H1 (cell line): ENCODE measurements at regions of chr14 and their contacts with region 1.

Region 1: DNA sequence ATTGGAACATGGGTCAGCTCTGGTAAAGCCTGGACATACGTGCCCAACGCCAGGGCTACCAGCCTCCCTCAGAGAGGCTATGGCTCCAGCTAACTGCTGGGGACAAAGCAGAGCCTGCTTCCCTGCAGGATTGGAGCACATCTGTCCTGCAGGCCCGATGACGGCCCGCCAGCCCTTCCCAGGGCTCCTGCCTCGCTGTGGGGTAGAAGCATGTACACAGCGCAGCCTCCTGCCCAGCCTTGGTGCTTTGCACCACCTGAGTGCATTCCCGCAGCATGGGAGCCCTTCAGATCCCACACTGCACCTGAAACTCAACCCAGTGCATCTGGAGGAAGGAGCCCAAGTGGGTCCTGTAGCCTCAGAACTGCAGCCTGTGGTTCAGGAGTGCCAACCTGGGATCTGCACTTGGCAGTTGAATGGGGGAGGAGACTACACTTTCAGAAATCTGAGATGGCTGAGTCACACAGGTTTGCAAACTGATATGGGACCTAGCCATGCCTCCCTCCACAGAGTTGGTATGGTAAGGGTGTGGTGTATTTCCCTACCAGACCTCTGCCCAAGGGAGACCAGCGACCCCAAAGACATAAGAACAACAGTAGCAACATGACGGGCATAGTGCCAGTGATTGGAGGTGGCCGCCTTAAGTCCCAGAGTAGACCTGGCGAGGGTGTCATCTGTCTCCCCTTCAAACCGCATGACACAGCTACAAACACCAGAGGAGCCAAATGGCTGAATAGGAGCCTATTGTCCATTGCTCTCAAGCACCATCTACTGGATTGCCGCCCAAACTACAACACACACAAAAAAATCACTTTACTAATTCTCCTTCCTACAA is 273.9 kb upstream of the MIS18BP1 start:
- DNase-seq: peak; percentile 50 to 73
- H3K4me3 ChIP-seq: no peak overlapping the region
- H3K27ac ChIP-seq: no peak overlapping the region
- H3K4me1 ChIP-seq: peaks cover 0 to 6% (median 0%) of the 10 kb centered on the region in 4 experiments; a peak in 3 of 7 replicates
- H3K27me3 ChIP-seq: no peaks in the 10 kb centered on the region; a peak in 1 of 7 replicates
- CTCF ChIP-seq: peak; percentile 18 to 94 (median 87)
- EP300 ChIP-seq: no peak
- POLR2A ChIP-seq: no peak
- RAD21 ChIP-seq: peak; percentile 82 to 84

Region 2: DNA sequence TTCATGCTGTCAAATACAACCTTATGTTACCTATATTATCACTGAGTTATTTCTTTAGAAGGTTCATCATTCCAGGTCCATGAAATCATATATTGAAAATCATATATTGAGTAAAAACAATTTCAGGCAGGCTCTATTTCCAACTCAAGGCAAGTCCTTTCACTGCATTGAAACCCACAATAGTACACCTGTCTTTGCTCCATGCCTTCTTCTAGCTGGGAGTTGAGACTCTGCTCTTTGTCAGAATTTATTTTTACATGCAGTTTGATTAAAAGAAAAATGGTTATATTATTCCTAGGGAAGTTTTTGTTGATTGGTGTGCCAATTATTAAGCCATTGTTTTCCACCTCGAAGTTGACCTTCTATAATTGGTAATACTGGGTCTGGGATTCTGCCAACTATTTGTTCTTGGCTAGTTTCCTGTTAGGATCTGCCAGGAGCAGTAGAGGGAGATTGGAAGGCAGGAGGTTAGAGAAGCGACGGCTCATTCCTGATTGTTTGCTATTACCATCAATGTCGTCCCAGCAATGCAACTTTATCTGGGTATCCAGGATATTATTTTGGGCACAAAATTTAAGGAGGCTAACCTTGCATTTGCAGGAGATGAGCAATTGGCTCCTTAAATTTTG is 194.5 kb before region 1 on chr14:
- CTCF ChIA-PET with region 1: no interaction called
- POLR2A ChIA-PET with region 1: no interaction called
- DNase-seq: no peak
- H3K4me3 ChIP-seq: no peak overlapping the region
- H3K27ac ChIP-seq: no peak overlapping the region
- H3K4me1 ChIP-seq: no peaks in the 10 kb centered on the region
- H3K27me3 ChIP-seq: no peaks in the 10 kb centered on the region
- CTCF ChIP-seq: no peak
- EP300 ChIP-seq: no peak
- POLR2A ChIP-seq: no peak
- RAD21 ChIP-seq: no peak

Region 3: GRCh38 chr14:45426670-45427282 is 100.2 kb before region 1 on chr14:
- CTCF ChIA-PET with region 1: interaction called, 11 read pairs
- POLR2A ChIA-PET with region 1: no interaction called
- DNase-seq: peak in 1 of 2 experiments; percentile 7
- H3K4me3 ChIP-seq: no peak overlapping the region
- H3K27ac ChIP-seq: no peak overlapping the region
- H3K4me1 ChIP-seq: peaks cover 0 to 4% (median 0%) of the 10 kb centered on the region in 4 experiments; a peak in 2 of 7 replicates
- H3K27me3 ChIP-seq: no peaks in the 10 kb centered on the region
- CTCF ChIP-seq: peak in 2 of 3 experiments; percentile 63 to 66; a peak in 3 of 4 replicates
- EP300 ChIP-seq: no peak
- POLR2A ChIP-seq: no peak
- RAD21 ChIP-seq: peak; percentile 83 to 89

Region 4: DNA sequence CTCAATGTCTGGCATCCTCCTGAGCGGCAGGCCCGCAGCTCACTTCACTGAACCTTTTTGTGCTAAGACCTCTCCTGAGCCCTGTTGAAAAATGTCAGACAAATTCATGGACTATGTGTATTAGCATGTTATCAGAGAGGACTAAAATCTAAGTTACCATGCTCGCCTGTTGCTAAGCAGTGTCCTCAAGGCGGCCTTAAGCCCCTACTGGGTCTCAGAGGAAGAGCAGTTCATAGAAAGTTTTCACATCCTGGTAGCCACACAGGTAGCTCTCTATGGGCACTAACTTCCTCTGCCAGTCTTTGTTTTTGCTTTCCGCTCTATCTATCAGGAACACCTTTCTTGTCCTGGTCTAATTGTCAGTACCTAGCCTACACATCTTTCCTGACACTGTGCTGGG is 32.7 kb after region 1 on chr14:
- CTCF ChIA-PET with region 1: no interaction called
- POLR2A ChIA-PET with region 1: no interaction called
- DNase-seq: no peak
- H3K4me3 ChIP-seq: no peak overlapping the region
- H3K27ac ChIP-seq: no peak overlapping the region
- H3K4me1 ChIP-seq: no peaks in the 10 kb centered on the region; a peak in 1 of 7 replicates
- H3K27me3 ChIP-seq: no peaks in the 10 kb centered on the region
- CTCF ChIP-seq: peak in 2 of 3 experiments; percentile 1 to 30; a peak in 1 of 4 replicates
- EP300 ChIP-seq: no peak
- POLR2A ChIP-seq: no peak
- RAD21 ChIP-seq: 0 out of 4 replicates have a peak, but pooled peaks of 1 of the 2 experiments have one; percentile 1